HepG2 (cell line): ENCODE measurements at regions of chr16 and their contacts with region 1.

Region 1: GRCh38 chr16:15949210-15950160 is at the start of gene ABCC1:
- DNase-seq: peak; percentile 60
- ATAC-seq: peak; percentile 59
- H3K4me3 ChIP-seq: peak within 1 kb of the TSS; percentile 90 to 94 (median 94)
- H3K27ac ChIP-seq: peak within 1 kb of the TSS; percentile 36
- H3K4me1 ChIP-seq: peaks cover 66% of the 10 kb centered on the region
- H3K27me3 ChIP-seq: no peaks in the 10 kb centered on the region; a peak in 1 of 5 replicates
- CTCF ChIP-seq: peak; percentile 40
- EP300 ChIP-seq: no peak
- POLR2A ChIP-seq: peak; percentile 19 to 58; a peak in 2 of 4 replicates
- RAD21 ChIP-seq: no peak
- total RNA-seq, gene ABCC1: 10.2 and 13.0 TPM in 2 replicates

Region 2: GRCh38 chr16:15857724-15858560 is 91.5 kb before region 1 on chr16:
- CTCF ChIA-PET with region 1: no interaction called
- POLR2A ChIA-PET with region 1: no interaction called
- in situ Hi-C with region 1: no loop called
- intact Hi-C with region 1: no loop called
- DNase-seq: no peak
- ATAC-seq: peak; percentile 62
- H3K4me3 ChIP-seq: peak overlapping the region; percentile 21 to 62 (median 41); a peak in 5 of 6 replicates
- H3K27ac ChIP-seq: no peak overlapping the region
- H3K4me1 ChIP-seq: peaks cover 11% of the 10 kb centered on the region
- H3K27me3 ChIP-seq: peaks cover 15 to 61% of the 10 kb centered on the region in 2 experiments; a peak in 4 of 5 replicates
- CTCF ChIP-seq: no peak
- EP300 ChIP-seq: no peak
- POLR2A ChIP-seq: no peak
- RAD21 ChIP-seq: no peak

Region 3: DNA sequence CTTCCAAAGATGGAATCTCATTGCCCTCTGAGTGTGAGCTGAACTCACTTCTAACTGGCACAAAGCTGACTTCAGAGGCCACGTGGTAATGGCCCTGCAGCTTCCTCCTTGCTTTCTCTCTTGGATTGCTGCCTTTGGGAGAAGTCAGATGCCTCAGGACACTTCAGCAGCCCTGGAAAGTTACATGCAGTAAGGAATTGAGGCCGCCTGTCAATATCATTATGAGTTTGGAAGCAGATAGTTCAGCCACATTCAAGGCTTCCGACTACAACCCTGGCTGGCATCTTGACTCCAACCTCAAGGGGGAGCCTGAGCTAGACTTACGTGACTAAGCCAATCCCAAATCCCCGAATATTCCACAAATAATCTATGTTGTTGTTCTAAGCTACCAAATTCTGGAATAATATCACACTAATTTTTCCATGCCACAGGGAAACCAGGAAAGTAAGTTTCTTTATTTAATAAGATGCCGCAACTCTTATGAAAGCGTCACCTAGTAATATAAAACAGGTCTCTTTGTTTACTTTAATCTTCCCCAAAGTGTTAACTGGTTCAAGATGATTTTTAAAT is 74.7 kb before region 1 on chr16:
- CTCF ChIA-PET with region 1: no interaction called
- POLR2A ChIA-PET with region 1: interaction called, 3 read pairs
- in situ Hi-C with region 1: no loop called
- intact Hi-C with region 1: loop called (anchors 2 kb)
- DNase-seq: peak; percentile 70
- ATAC-seq: peak; percentile 95
- H3K4me3 ChIP-seq: no peak overlapping the region
- H3K27ac ChIP-seq: no peak overlapping the region
- H3K4me1 ChIP-seq: peaks cover 7% of the 10 kb centered on the region
- H3K27me3 ChIP-seq: no peaks in the 10 kb centered on the region
- CTCF ChIP-seq: peak; percentile 86
- EP300 ChIP-seq: no peak
- POLR2A ChIP-seq: no peak
- RAD21 ChIP-seq: peak; percentile 83

Region 4: GRCh38 chr16:15899538-15900100 is 49.9 kb before region 1 on chr16:
- CTCF ChIA-PET with region 1: no interaction called
- POLR2A ChIA-PET with region 1: interaction called, 14 read pairs
- in situ Hi-C with region 1: no loop called
- intact Hi-C with region 1: loop called (anchors 5 kb)
- DNase-seq: peak; percentile 95
- ATAC-seq: peak; percentile 95
- H3K4me3 ChIP-seq: no peak overlapping the region
- H3K27ac ChIP-seq: peak overlapping the region; percentile 3
- H3K4me1 ChIP-seq: peaks cover 62% of the 10 kb centered on the region
- H3K27me3 ChIP-seq: no peaks in the 10 kb centered on the region
- CTCF ChIP-seq: 0 out of 2 replicates have a peak, but pooled peaks have one; percentile 4
- EP300 ChIP-seq: peak in 1 of 2 experiments; percentile 79; a peak in 2 of 4 replicates
- POLR2A ChIP-seq: no peak
- RAD21 ChIP-seq: 0 out of 2 replicates have a peak, but pooled peaks have one; percentile 25

Region 5: DNA sequence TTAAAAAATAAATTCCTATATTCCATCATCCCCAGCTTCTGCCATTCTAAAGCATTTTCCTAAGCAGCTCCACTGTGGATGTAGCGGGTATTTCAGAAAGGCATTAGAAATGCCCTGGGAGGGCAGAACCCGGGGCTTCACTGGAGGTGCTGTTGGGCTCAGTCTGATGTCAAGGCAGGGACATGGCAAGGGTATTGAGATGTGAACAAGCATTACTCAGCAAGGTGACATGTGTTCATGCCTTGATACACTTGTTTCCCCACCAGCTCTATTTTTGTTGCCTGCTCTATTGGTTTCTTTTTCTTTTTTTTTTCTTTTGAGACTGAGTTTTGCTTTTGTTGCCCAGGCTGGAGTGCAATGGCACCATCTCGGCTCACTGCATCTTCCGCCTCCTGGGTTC is 35.7 kb after region 1 on chr16:
- CTCF ChIA-PET with region 1: no interaction called
- POLR2A ChIA-PET with region 1: no interaction called
- in situ Hi-C with region 1: no loop called
- intact Hi-C with region 1: no loop called
- DNase-seq: no peak
- ATAC-seq: no peak
- H3K4me3 ChIP-seq: no peak overlapping the region
- H3K27ac ChIP-seq: no peak overlapping the region
- H3K4me1 ChIP-seq: no peaks in the 10 kb centered on the region
- H3K27me3 ChIP-seq: no peaks in the 10 kb centered on the region
- CTCF ChIP-seq: no peak
- EP300 ChIP-seq: no peak
- POLR2A ChIP-seq: no peak
- RAD21 ChIP-seq: no peak

Region 6: GRCh38 chr16:15996432-15997109 is 47.1 kb after region 1 on chr16:
- CTCF ChIA-PET with region 1: no interaction called
- POLR2A ChIA-PET with region 1: interaction called, 6 read pairs
- in situ Hi-C with region 1: no loop called
- intact Hi-C with region 1: loop called (anchors 5 kb)
- DNase-seq: peak; percentile 99
- ATAC-seq: peak; percentile 85
- H3K4me3 ChIP-seq: 0 out of 6 replicates have a peak overlapping the region, but pooled peaks of 1 of the 3 experiments have one; percentile 1
- H3K27ac ChIP-seq: peak overlapping the region; percentile 7
- H3K4me1 ChIP-seq: peaks cover 41% of the 10 kb centered on the region
- H3K27me3 ChIP-seq: no peaks in the 10 kb centered on the region
- CTCF ChIP-seq: peak; percentile 72
- EP300 ChIP-seq: peak; percentile 64 to 86; a peak in 3 of 4 replicates
- POLR2A ChIP-seq: no peak
- RAD21 ChIP-seq: peak; percentile 79; the same call in 1 of the 2 replicates